ENCODE measurements at regions of chr3 and their contacts with region 1.

Region 1: DNA sequence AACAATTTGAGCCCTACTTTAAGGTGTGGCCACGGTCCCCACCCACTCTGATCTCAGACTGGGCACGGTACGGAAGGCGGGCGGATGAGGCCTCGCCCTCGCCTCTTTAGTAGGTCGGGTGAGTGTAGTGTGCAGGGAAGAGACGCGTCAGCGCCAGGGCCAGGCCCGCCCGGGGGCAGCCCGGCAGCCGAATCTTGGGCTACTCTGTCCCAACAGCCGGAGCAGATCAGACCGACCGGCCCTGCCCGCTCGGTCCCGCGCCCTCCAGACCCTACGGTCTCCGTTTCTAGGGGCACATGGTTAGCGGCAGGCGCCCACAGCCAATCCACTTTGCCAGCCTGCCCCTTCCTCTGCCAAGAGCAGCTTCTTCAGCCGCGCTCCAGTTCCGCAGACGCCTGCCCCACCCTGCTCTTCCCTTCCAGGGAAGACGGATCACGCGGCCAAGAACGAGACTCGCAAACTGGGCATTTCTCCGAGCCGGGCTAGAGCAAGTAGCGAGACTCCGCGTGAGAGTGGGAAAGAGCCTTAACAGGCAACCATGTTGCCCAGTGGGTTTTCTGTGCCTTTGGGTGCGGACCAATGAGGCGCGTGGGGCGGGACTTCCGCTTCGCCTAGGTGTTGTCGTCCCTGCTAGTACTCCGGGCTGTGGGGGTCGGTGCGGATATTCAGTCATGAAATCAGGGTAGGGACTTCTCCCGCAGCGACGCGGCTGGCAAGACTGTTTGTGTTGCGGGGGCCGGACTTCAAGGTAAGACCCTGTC is at the start of gene RNF13:
- DNase-seq: peak; percentile 98 to 99
- ATAC-seq: peak; percentile 91 to 96
- H3K4me3 ChIP-seq: peak within 1 kb of the TSS; percentile 72 to 90 (median 82)
- H3K27ac ChIP-seq: peak within 1 kb of the TSS; percentile 91 to 98 (median 96)
- H3K4me1 ChIP-seq: peaks cover 41 to 48% of the 10 kb centered on the region in 2 donors
- H3K27me3 ChIP-seq: no peaks in the 10 kb centered on the region
- CTCF ChIP-seq: no peak
- POLR2A ChIP-seq: peak; percentile 75 to 89
- total RNA-seq, gene RNF13: 48.3 to 63.6 (median 56.9) TPM

Region 2: GRCh38 chr3:149717391-149718056 is 95.3 kb before region 1 on chr3:
- in situ Hi-C with region 1: no loop called
- intact Hi-C with region 1: no loop called
- DNase-seq: peak in 1 of 2 donors; percentile 32
- ATAC-seq: peak; percentile 60 to 70
- H3K4me3 ChIP-seq: peak overlapping the region in 1 of 4 donors; percentile 24
- H3K27ac ChIP-seq: no peak overlapping the region
- H3K4me1 ChIP-seq: no peaks in the 10 kb centered on the region
- H3K27me3 ChIP-seq: no peaks in the 10 kb centered on the region
- CTCF ChIP-seq: peak; percentile 60 to 79 (median 72)
- POLR2A ChIP-seq: no peak

Region 3: DNA sequence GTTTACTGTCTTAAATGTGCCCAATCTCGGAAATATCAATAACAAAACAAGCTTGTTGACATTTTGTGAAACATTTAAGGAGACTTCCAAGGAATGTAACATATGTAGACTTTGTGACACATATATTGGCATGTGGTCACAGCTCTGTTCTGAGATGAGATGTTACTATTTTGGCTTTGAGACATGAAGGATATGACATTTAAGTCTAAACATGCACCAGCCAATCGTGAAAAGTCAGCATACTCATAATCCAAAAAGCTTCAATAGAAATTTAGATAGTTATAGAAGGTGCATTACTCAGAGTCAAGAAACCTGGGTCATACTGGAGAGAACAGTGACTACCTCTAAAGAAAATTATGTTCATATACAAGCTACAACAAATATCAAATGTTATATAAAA is 73.9 kb before region 1 on chr3:
- in situ Hi-C with region 1: no loop called
- intact Hi-C with region 1: no loop called
- DNase-seq: no peak
- ATAC-seq: no peak
- H3K4me3 ChIP-seq: no peak overlapping the region
- H3K27ac ChIP-seq: no peak overlapping the region
- H3K4me1 ChIP-seq: no peaks in the 10 kb centered on the region
- H3K27me3 ChIP-seq: no peaks in the 10 kb centered on the region
- CTCF ChIP-seq: no peak
- POLR2A ChIP-seq: no peak

Region 4: DNA sequence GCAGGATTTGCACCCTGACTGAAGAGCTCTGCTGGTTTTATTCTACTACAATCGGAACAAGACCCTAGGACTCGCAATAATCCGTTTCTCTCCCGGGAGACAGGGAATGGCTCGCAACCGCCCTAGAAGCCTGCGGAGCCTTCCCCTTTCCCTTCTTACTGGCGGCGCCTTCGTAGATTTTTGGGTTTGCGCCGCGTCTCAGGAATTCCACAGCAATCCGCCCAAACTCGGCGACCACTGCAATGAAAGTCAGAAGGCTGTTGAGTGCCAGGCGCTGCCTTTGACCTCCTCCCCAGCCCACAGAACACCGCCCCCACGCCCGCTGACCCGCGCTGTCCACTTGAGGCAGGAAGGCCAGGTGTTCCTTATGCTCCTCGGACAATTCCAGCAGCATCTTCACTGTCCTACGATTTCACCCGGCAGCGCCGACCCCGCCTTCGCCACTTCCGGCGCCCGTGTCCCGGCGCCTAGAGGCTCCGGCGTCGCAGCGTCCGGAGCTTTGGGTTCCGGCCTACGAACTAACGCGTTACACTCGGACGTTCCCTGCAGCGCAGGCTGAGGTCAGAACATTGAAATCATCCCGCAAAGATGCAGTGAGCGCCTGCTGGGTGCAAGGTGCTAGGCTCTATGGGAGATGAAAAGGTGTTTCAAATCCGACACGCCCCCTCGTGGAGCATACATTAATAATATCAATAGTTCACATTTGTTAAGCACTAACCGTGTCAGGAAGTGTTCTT is 60.6 kb before region 1 on chr3 and contains the start of gene COMMD2:
- in situ Hi-C with region 1: no loop called
- intact Hi-C with region 1: loop called (anchors 2 kb)
- DNase-seq: peak; percentile 30 to 65
- ATAC-seq: peak; percentile 94 to 98
- H3K4me3 ChIP-seq: peak within 1 kb of the TSS; percentile 90 to 98 (median 92)
- H3K27ac ChIP-seq: peak within 1 kb of the TSS; percentile 80 to 88 (median 84)
- H3K4me1 ChIP-seq: peaks cover 7 to 9% of the 10 kb centered on the region in 2 donors
- H3K27me3 ChIP-seq: no peaks in the 10 kb centered on the region
- CTCF ChIP-seq: peak; percentile 22 to 42 (median 35)
- POLR2A ChIP-seq: peak in 1 of 2 donors; percentile 49
- total RNA-seq, gene COMMD2: 7.9 to 10.0 (median 8.6) TPM

Region 5: GRCh38 chr3:149765762-149766334 is 46.9 kb before region 1 on chr3:
- in situ Hi-C with region 1: no loop called
- intact Hi-C with region 1: loop called (anchors 1 kb)
- DNase-seq: no peak
- ATAC-seq: no peak
- H3K4me3 ChIP-seq: no peak overlapping the region
- H3K27ac ChIP-seq: no peak overlapping the region
- H3K4me1 ChIP-seq: no peaks in the 10 kb centered on the region
- H3K27me3 ChIP-seq: peaks cover 2 to 5% (median 4%) of the 10 kb centered on the region in 3 donors
- CTCF ChIP-seq: peak in 2 of 5 experiments; percentile 7 to 36
- POLR2A ChIP-seq: no peak

Region 6: GRCh38 chr3:150094150-150094925 is 281.6 kb after region 1 on chr3:
- in situ Hi-C with region 1: no loop called
- intact Hi-C with region 1: no loop called
- DNase-seq: peak; percentile 91 to 95
- ATAC-seq: peak; percentile 79 to 88
- H3K4me3 ChIP-seq: peak overlapping the region in 1 of 4 donors; percentile 24
- H3K27ac ChIP-seq: peak overlapping the region; percentile 82 to 97 (median 90)
- H3K4me1 ChIP-seq: peaks cover 35 to 60% of the 10 kb centered on the region in 2 donors
- H3K27me3 ChIP-seq: no peaks in the 10 kb centered on the region
- CTCF ChIP-seq: peak in 2 of 5 experiments; percentile 5 to 15
- POLR2A ChIP-seq: peak; percentile 31 to 55